Activated CD4-positive, alpha-beta memory T cell treated with anti-CD3 and anti-CD28 coated beads for 36 hours (primary cell): ENCODE measurements at regions of chr14 and their contacts with region 1.

Region 1: GRCh38 chr14:106872611-106873446 is 1346.4 kb downstream of the TMEM121 start:
- DNase-seq: peak; percentile 95
- H3K4me3 Mint-ChIP-seq: peak overlapping the region; percentile 32
- H3K27ac Mint-ChIP-seq: peak overlapping the region; percentile 25
- H3K4me1 Mint-ChIP-seq: peaks cover 14% of the 10 kb centered on the region
- H3K27me3 Mint-ChIP-seq: peaks cover 31% of the 10 kb centered on the region

Region 2: GRCh38 chr14:106776395-106776983 is 96.3 kb before region 1 on chr14:
- CTCF ChIA-PET with region 1: interaction called, 10 read pairs
- POLR2A ChIA-PET with region 1: no interaction called
- intact Hi-C with region 1: no loop called
- DNase-seq: no peak
- H3K4me3 Mint-ChIP-seq: no peak overlapping the region
- H3K27ac Mint-ChIP-seq: no peak overlapping the region
- H3K4me1 Mint-ChIP-seq: peaks cover 24% of the 10 kb centered on the region
- H3K27me3 Mint-ChIP-seq: peaks cover 2% of the 10 kb centered on the region

Region 3: DNA sequence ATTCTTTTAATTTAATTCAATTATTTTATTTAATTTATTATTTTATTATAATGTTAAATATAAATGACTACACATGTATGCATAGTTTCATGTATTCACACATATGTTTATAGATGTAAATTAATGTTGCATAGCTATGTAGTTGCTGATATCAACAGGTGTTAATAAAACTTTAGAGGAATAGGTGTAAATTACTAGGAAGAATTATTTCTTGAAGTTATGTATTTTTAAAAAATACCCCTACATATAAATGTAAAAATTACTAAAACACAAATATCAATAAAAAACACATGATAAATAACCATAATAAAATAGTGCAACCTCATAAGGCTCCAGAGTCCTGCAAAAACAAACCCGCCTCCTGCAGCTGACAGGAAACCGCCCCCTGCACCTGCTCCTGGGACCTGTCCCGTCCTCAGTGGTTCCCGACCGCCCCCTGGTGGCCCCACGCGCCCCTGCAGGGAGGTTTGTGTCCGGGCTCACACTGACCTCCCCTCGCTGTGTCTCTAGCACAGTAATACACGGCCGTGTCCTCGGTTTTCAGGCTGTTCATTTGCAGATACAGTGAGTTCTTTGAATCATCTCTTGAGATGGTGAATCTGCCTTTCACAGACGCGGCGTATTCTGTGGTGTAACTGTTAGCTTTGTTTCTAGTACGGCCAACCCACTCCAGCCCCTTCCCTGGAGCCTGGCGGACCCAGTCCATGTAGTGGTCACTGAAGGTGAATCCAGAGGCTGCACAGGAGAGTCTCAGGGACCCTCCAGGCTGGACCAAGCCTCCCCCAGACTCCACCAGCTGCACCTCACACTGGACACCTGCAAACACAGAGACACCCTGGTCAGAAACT is 82.4 kb before region 1 on chr14:
- CTCF ChIA-PET with region 1: interaction called, 12 read pairs
- POLR2A ChIA-PET with region 1: no interaction called
- intact Hi-C with region 1: no loop called
- DNase-seq: peak; percentile 88
- H3K4me3 Mint-ChIP-seq: no peak overlapping the region
- H3K27ac Mint-ChIP-seq: no peak overlapping the region
- H3K4me1 Mint-ChIP-seq: peaks cover 4% of the 10 kb centered on the region
- H3K27me3 Mint-ChIP-seq: peaks cover 11% of the 10 kb centered on the region

Region 4: GRCh38 chr14:106823552-106823951 is 49.3 kb before region 1 on chr14:
- CTCF ChIA-PET with region 1: interaction called, 14 read pairs
- POLR2A ChIA-PET with region 1: no interaction called
- intact Hi-C with region 1: no loop called
- DNase-seq: no peak
- H3K4me3 Mint-ChIP-seq: no peak overlapping the region
- H3K27ac Mint-ChIP-seq: no peak overlapping the region
- H3K4me1 Mint-ChIP-seq: peaks cover 4% of the 10 kb centered on the region
- H3K27me3 Mint-ChIP-seq: peaks cover 22% of the 10 kb centered on the region

Region 5: DNA sequence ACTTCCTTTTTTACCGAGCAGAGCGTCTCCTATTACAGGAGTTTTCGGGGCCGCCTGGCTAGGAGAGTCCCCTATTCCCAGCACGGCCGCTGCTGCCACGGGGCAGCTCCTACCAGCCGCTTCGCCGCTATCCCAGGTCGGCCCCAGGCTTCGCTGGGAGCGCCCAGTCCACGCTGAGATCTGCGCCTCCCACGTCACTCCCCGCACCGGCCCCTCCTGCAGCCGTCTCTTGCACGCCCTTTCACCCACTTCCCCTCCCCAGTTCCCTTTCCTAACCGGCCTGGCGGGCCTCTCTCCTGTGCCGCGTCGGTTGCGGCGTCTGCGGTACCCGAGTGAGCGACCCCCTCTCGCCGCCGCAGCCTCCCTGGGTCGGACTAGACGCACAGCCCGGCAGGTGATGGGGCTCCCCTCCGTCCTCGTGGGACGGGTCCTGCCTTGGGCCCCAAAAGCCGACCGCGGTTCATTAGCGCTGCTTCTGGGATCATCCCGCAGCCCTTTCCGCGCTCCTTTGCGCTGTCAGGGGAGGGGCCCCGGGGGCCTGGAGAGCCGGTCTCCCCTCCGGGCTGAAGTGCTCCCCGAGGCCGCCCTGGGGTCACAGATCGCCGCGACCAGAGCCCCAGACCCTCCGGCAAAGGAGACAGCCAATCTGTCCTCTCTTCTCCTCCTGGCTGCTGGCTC is 28.1 kb before region 1 on chr14:
- CTCF ChIA-PET with region 1: interaction called, 48 read pairs
- POLR2A ChIA-PET with region 1: no interaction called
- intact Hi-C with region 1: loop called (anchors 2 kb)
- DNase-seq: peak; percentile 69
- H3K4me3 Mint-ChIP-seq: peak overlapping the region; percentile 87
- H3K27ac Mint-ChIP-seq: peak overlapping the region; percentile 47
- H3K4me1 Mint-ChIP-seq: peaks cover 29% of the 10 kb centered on the region
- H3K27me3 Mint-ChIP-seq: no peaks in the 10 kb centered on the region

Region 6: DNA sequence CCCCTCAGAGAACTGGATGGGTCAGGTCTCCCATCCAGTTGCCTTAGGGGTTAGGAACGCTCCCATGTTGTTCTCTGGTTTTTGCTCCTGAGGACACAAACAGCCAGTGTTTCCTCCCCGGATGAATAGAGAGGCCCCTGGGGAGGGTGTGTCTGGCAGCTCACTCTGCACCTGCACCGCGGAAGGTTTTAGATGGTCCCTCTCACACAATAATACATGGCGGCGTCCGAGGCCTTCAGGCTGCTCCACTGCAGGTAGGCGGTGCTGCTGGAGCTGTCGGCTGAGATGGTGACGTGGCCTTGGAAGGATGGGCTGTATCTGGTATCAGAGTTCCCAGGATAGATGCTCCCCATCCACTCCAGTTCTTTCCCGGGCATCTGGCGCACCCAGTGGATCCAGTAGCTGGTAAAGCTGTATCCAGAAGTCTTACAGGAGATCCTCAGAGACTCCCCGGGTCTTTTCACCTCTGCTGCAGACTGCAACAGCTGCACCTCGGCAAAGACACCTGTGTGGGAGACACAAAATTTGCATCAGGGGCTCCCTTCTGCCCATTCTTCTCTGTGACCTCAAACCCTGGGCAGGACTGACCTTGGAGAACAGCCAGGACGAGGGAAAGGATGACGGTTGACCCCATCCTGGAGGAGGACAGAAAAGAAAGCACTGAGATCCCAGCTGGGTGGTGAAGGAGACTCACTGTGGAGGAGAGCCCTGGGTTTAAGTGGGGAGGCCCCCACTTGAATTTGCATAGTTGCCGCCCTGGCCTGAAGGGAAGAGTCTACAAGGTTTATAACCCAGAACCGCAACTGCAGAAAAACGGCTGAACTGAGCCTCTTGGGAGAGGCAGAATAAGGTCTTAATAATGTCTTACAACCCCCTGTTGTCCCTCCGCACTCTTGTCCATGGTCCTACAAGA is 21.7 kb before region 1 on chr14:
- CTCF ChIA-PET with region 1: interaction called, 20 read pairs
- POLR2A ChIA-PET with region 1: no interaction called
- intact Hi-C with region 1: no loop called
- DNase-seq: no peak
- H3K4me3 Mint-ChIP-seq: no peak overlapping the region
- H3K27ac Mint-ChIP-seq: no peak overlapping the region
- H3K4me1 Mint-ChIP-seq: peaks cover 7% of the 10 kb centered on the region
- H3K27me3 Mint-ChIP-seq: peaks cover 2% of the 10 kb centered on the region

Region 7: GRCh38 chr14:106883218-106883692 is 10.4 kb after region 1 on chr14:
- CTCF ChIA-PET with region 1: interaction called, 24 read pairs
- POLR2A ChIA-PET with region 1: no interaction called
- intact Hi-C with region 1: no loop called
- DNase-seq: peak; percentile 76
- H3K4me3 Mint-ChIP-seq: no peak overlapping the region
- H3K27ac Mint-ChIP-seq: no peak overlapping the region
- H3K4me1 Mint-ChIP-seq: no peaks in the 10 kb centered on the region
- H3K27me3 Mint-ChIP-seq: peaks cover 7% of the 10 kb centered on the region